Activated B cell treated with CpG ODN at 0.5 μM for 24 hours (primary cell): ENCODE measurements at regions of chr2 and their contacts with region 1.

Region 1: GRCh38 chr2:196068271-196069209 is at the start of gene DNAH7:
- DNase-seq: peak; percentile 83
- ATAC-seq: peak; percentile 94
- H3K4me3 Mint-ChIP-seq: peak within 1 kb of the TSS; percentile 93
- H3K27ac Mint-ChIP-seq: peak within 1 kb of the TSS; percentile 91
- H3K4me1 Mint-ChIP-seq: peaks cover 12% of the 10 kb centered on the region
- H3K27me3 Mint-ChIP-seq: peaks cover under 1% of the 10 kb centered on the region
- CTCF ChIP-seq: peak; percentile 47
- total RNA-seq, gene DNAH7: 0.17 and 0.29 TPM in 2 replicates

Region 2: GRCh38 chr2:195318440-195319111 is 750.0 kb before region 1 on chr2:
- CTCF ChIA-PET with region 1: interaction called, 3 read pairs
- POLR2A ChIA-PET with region 1: no interaction called
- intact Hi-C with region 1: loop called (anchors 5 kb)
- DNase-seq: no peak
- ATAC-seq: no peak
- H3K4me3 Mint-ChIP-seq: no peak overlapping the region
- H3K27ac Mint-ChIP-seq: no peak overlapping the region
- H3K4me1 Mint-ChIP-seq: peaks cover 2% of the 10 kb centered on the region
- H3K27me3 Mint-ChIP-seq: no peaks in the 10 kb centered on the region
- CTCF ChIP-seq: peak; percentile 81

Region 3: DNA sequence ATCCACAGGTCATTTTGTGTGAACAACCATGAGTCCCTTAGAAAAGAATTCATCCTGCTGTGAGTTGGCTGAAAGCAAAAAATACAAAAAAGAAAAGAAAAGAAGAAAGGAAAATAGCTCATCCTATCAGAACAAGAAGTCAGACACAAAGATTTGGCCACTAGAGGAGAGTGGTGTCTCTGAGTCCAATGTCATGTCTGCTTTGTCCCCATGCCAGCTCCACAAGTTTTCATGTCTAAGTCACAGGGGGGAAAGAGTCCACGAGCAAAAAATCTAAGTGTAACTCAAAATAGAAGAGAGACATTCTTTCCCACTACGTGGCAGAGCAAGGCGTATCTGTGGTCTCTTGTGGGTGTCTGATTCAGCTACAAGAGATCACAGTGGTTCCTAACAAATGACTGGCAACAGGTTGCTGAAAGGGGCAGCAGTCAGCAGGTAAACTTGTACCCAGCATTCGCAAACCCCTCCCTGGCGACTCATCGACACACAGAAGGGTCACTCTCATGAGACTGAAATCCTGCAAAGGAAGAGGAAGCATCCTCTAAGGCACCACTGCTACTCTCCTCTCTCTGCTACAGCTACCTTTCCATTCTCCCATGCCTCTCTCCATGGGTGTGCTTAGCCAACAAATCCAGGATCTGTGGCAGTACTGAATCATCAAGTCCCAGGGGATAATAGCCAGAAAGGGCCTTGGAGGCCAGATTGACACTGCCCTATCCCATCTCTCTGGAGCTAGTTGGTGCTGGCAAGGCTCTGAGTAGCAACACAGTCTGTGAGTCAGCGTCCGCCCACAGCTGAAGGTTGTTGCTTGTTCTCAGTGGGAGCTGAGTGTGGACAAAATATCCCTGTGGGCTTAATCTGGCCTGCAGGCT is 534.5 kb before region 1 on chr2:
- CTCF ChIA-PET with region 1: interaction called, 3 read pairs
- POLR2A ChIA-PET with region 1: no interaction called
- intact Hi-C with region 1: loop called (anchors 1 kb)
- DNase-seq: peak; percentile 28
- ATAC-seq: peak; percentile 73
- H3K4me3 Mint-ChIP-seq: peak overlapping the region; percentile 66
- H3K27ac Mint-ChIP-seq: peak overlapping the region; percentile 97
- H3K4me1 Mint-ChIP-seq: peaks cover 72% of the 10 kb centered on the region
- H3K27me3 Mint-ChIP-seq: no peaks in the 10 kb centered on the region
- CTCF ChIP-seq: no peak

Region 4: GRCh38 chr2:195664528-195664927 is 404.0 kb before region 1 on chr2:
- CTCF ChIA-PET with region 1: interaction called, 24 read pairs
- POLR2A ChIA-PET with region 1: interaction called, 3 read pairs
- intact Hi-C with region 1: loop called (anchors 1 kb)
- DNase-seq: no peak
- ATAC-seq: no peak
- H3K4me3 Mint-ChIP-seq: no peak overlapping the region
- H3K27ac Mint-ChIP-seq: peak overlapping the region; percentile 66
- H3K4me1 Mint-ChIP-seq: peaks cover 60% of the 10 kb centered on the region
- H3K27me3 Mint-ChIP-seq: no peaks in the 10 kb centered on the region
- CTCF ChIP-seq: no peak

Region 5: DNA sequence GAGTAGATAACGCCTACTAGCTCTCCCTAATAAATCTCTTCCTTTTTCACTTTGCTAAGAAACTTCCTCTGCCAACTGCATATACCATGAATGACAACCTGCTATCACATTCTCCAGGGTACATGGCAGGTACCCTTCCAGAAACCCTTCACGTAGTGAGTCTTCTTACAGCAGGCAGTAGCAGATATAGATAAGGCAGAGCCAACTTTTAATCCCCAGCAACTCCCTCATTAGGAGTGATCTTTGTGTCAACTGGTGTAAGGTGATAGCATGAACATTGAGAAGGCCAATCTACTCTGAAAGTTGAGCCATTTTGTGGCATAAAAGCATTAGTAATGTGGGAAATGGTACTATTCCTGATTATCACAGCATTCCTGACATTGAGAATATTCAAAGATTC is 108.6 kb after region 1 on chr2:
- CTCF ChIA-PET with region 1: no interaction called
- POLR2A ChIA-PET with region 1: no interaction called
- intact Hi-C with region 1: no loop called
- DNase-seq: no peak
- ATAC-seq: no peak
- H3K4me3 Mint-ChIP-seq: peak overlapping the region; percentile 74
- H3K27ac Mint-ChIP-seq: peak overlapping the region; percentile 94
- H3K4me1 Mint-ChIP-seq: peaks cover 93% of the 10 kb centered on the region
- H3K27me3 Mint-ChIP-seq: no peaks in the 10 kb centered on the region
- CTCF ChIP-seq: no peak

Region 6: DNA sequence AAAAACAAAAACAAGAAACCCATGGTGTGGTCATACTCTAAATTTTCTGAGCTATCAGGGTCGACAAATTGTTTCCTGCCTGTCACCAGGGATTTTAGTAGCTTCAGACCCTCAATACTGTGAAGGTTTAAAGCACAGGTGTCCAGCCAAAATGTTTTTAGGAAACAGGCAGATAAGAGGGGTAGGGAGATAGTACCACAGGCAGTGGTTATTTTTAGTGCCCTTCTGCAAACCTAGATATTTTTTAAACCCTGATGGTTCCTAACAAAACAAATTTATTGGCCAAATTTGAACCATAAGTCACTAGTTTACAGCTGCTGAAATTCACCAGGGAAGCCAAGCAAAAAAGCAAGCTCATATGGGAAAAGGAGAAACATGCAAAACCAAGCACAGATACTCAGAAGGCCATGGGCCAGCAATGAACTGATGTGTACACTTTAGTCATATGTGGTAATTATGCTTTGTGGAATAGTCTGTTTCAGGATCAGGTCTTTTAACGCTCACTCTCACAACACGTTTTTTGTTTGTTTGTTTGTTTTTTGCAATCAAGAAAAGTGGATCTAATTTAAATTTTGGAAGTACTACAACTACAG is 259.6 kb after region 1 on chr2:
- CTCF ChIA-PET with region 1: no interaction called
- POLR2A ChIA-PET with region 1: no interaction called
- intact Hi-C with region 1: no loop called
- DNase-seq: no peak
- ATAC-seq: no peak
- H3K4me3 Mint-ChIP-seq: no peak overlapping the region
- H3K27ac Mint-ChIP-seq: no peak overlapping the region
- H3K4me1 Mint-ChIP-seq: no peaks in the 10 kb centered on the region
- H3K27me3 Mint-ChIP-seq: peaks cover 8% of the 10 kb centered on the region
- CTCF ChIP-seq: no peak

Region 7: DNA sequence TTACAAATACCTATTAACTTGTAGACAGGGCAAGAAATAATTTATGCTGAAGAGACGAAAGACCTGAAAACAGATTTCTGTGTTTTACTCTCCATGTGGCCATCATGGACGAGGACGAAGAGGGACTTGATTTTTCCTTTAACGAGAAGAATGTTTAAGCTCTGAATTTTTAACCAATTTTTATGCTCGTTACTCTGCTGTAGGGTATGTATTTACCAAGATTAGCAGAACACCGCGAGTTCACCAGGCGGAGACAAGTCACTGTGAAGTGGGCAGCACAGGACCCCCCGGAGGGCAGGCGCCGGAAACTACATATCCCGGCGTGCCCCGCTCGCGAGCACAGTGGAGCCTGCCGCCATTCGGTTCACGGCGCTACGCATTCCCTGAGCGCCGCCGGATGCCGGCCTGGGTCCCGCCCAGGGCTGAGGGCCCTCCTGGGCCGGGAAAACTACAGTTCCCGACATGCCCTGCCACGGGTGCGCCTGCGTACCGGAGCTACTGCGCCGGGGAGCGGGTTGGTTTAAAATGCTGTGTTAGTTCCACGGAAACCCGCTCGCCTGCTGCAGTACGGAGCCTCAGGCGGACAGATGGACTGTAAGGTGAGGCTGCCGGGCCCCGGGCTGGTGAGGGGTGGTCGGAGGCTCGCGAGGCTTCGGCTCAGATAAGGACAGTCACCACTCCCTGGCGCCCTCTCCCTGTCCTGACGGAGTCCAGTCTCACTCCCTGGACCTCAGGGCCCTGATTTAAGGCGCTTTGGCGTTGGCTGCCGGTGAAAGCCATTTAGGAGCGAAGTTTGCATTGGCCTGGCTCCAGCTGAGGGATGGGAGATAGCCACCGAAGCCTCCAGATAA is 570.9 kb after region 1 on chr2 and contains the start of gene CCDC150:
- CTCF ChIA-PET with region 1: interaction called, 6 read pairs
- POLR2A ChIA-PET with region 1: no interaction called
- intact Hi-C with region 1: loop called (anchors 1 kb)
- DNase-seq: peak; percentile 90
- ATAC-seq: peak; percentile 100
- H3K4me3 Mint-ChIP-seq: peak within 1 kb of the TSS; percentile 89
- H3K27ac Mint-ChIP-seq: peak within 1 kb of the TSS; percentile 53
- H3K4me1 Mint-ChIP-seq: peaks cover 14% of the 10 kb centered on the region
- H3K27me3 Mint-ChIP-seq: no peaks in the 10 kb centered on the region
- CTCF ChIP-seq: no peak
- total RNA-seq, gene CCDC150: 2.3 and 2.6 TPM in 2 replicates